ENCODE measurements at regions of chr9 and their contacts with region 1.

Region 1: GRCh38 chr9:34437006-34437925 is 21.1 kb downstream of the FAM219A start:
- DNase-seq: peak; percentile 31
- ATAC-seq: peak; percentile 81 to 86

Region 2: DNA sequence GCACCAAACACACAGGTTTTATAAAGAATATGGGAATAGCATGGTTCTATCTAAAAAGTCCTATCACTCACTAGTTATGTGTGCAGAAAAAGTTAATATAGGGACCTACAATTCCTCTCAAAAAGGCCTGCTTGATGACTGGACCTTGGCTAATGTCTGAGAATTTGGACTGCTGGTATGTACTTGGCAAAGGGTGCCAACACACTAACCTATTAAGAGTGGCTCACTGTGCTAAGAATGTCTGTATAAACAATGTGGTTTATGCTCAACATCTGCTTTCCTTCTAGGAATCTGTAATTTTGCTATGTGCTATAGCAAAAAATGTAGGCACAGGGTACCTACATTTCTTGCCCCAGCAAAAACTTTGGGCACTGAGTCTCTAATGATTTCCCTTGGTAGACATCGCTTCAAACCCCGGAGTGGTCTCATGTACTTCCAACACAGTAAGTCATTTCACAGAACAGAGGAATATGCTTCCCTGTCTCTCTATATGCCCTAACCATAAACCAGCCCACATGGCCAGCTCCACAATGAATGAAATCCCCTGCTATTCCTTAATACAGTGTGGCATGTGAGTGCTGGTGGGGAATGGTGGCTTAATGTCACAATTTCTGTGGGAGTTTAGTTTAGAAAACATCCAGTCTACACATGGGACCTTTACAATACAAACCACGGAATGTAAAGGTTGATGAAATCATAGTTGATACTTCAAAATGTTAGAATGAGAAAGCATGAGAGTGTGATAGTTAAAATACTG is 490.3 kb before region 1 on chr9:
- intact Hi-C with region 1: no loop called
- DNase-seq: no peak
- ATAC-seq: peak; percentile 44 to 57

Region 3: DNA sequence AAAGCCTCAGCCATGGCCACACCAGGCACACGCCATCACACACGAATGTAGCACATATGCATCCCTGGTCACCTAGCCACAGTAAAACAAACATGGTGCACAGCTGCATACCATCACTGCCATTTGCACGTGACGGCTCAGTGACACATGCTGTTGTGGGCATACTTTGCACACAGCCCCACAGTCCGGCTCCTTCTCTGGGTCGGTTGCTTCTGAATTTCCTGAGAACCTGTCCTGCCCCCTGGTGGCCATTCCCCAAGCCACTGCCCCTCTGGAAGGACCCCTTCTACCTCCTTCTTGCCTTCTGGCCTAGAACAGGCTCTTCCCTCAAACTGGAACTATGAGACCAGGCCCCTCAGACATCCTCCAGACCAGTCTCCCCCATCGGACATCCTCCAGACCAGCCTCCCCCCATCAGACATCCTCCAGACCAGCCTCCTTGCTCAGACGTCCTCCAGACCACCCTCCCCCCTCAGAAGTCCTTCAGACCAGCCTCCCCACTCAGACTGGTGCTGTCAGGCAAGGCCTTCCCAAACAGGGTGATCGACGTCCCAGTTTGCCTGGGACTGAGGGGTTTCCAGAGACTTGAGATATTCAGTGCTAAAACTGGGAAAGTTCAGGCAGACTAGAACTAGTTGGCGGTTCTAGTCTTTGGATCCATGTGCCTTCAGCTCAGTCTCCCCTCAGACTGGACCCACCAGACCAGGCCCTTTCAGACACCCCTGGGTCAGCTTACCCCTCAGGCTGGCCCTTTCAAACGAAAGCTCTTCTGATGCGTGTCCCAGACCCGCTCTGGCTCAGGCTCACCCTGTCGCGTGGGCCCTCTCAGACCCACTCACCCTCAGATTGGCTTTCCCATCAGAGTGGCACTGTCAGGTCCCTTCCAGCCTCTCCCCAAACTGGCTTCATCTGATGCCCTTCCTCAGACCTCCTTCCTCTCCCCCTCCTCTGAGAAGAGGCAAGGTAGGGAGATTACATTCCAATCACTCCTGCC is 109.9 kb after region 1 on chr9:
- intact Hi-C with region 1: loop called in 1 of 2 experiments (anchors 5 kb)
- DNase-seq: peak; percentile 67
- ATAC-seq: peak; percentile 46 to 76